ENCODE measurements at regions of chr3 and their contacts with region 1.

Region 1: DNA sequence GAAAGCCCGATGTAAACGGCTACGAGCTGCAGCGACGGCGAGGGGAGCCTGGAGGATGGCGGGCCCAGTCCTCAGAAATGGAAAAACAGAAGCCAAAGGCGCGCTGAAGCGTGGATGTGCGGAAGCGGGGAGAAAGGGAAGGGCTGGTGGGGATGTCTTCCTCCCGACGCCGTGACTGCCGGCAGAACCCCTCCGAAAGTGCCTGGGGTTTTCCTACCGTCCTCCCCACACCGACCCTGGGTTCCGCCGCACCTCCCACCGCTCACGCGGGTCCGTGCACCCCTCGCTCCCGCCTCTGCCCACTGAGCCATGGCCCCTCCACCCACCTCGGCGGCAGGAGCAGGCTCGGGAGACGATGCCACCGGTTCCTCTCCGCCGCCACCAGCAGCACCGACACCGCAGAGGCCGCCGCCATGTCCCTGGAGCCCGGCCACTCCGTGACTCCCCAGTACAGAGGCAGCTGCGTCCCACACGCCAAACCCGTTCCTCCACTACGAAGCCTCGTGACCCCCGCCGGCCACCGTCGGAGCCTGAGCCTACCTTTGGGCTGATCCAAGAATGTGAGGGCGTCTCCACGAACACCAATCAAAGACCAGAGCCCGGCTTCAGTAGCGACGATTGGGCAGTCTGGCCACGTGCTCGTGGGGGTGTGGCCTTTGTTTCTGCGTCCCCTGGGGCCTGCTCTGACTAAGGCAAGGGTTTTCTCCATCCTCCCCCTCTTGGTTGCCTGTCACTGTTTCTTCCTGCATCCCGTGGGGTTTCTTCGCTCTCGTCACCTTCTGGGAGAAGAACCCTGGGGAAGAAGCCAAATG is at the start of gene MCCC1:
- DNase-seq: peak; percentile 97
- ATAC-seq: peak; percentile 96
- H3K4me3 ChIP-seq: peak within 1 kb of the TSS; percentile 74 to 98 (median 98)
- H3K4me3 Mint-ChIP-seq: peak within 1 kb of the TSS; percentile 99
- H3K27ac ChIP-seq: peak within 1 kb of the TSS; percentile 80 to 87
- H3K27ac Mint-ChIP-seq: peak within 1 kb of the TSS; percentile 97
- H3K4me1 ChIP-seq: peaks cover 15% of the 10 kb centered on the region in 2 donors
- H3K4me1 Mint-ChIP-seq: peaks cover 35% of the 10 kb centered on the region
- H3K27me3 ChIP-seq: no peaks in the 10 kb centered on the region
- H3K27me3 Mint-ChIP-seq: no peaks in the 10 kb centered on the region
- CTCF ChIP-seq: no peak
- total RNA-seq, gene MCCC1: 32.8 and 36.3 TPM in 2 replicates

Region 2: DNA sequence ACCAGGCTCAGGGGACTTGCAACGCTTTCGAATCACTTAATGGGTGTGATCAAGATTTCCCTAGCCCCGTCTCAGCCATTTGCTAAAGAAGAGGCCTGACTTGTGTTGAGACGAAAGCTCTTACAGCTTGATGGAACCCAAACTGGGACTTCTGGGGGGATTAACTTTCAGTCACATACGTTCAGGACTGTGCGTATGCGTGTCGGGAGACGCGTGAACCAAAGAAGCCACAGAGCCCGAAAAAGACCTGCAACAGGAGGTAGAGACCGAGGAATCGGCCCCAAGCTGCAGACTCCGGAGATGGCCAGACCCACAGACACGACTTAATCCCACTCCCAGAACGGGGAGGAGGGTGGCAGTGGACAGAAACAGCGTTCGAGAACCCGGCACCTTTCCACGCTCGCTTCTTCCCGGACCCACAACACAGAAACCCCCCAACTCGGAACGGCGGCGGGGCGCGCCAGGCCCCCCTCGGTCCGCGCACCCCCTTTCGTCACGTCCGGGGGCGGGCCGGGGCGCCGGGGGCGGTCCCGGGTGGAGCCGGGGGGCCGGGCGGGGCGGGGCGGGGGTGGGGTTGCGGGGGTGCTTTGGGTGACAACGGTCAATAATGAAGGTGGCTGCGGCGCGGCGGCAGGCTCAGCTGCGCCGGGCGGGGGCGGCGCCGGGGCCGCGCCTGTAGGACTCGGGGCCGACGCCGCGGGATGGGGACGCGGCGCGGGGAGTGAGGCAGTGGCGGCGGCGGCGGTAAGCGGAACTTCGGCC is 306.1 kb before region 1 on chr3 and contains the start of gene ATP11B:
- CTCF ChIA-PET with region 1: no interaction called
- POLR2A ChIA-PET with region 1: no interaction called
- intact Hi-C with region 1: loop called (anchors 1 kb)
- DNase-seq: peak; percentile 91
- ATAC-seq: peak; percentile 79
- H3K4me3 ChIP-seq: peak within 1 kb of the TSS; percentile 78 to 99 (median 94)
- H3K4me3 Mint-ChIP-seq: peak within 1 kb of the TSS; percentile 100
- H3K27ac ChIP-seq: peak within 1 kb of the TSS; percentile 92 to 98
- H3K27ac Mint-ChIP-seq: peak within 1 kb of the TSS; percentile 100
- H3K4me1 ChIP-seq: peaks cover 34 to 40% of the 10 kb centered on the region in 2 donors
- H3K4me1 Mint-ChIP-seq: peaks cover 39% of the 10 kb centered on the region
- H3K27me3 ChIP-seq: no peaks in the 10 kb centered on the region
- H3K27me3 Mint-ChIP-seq: no peaks in the 10 kb centered on the region
- CTCF ChIP-seq: no peak
- total RNA-seq, gene ATP11B: 81.9 and 94.6 TPM in 2 replicates

Region 3: DNA sequence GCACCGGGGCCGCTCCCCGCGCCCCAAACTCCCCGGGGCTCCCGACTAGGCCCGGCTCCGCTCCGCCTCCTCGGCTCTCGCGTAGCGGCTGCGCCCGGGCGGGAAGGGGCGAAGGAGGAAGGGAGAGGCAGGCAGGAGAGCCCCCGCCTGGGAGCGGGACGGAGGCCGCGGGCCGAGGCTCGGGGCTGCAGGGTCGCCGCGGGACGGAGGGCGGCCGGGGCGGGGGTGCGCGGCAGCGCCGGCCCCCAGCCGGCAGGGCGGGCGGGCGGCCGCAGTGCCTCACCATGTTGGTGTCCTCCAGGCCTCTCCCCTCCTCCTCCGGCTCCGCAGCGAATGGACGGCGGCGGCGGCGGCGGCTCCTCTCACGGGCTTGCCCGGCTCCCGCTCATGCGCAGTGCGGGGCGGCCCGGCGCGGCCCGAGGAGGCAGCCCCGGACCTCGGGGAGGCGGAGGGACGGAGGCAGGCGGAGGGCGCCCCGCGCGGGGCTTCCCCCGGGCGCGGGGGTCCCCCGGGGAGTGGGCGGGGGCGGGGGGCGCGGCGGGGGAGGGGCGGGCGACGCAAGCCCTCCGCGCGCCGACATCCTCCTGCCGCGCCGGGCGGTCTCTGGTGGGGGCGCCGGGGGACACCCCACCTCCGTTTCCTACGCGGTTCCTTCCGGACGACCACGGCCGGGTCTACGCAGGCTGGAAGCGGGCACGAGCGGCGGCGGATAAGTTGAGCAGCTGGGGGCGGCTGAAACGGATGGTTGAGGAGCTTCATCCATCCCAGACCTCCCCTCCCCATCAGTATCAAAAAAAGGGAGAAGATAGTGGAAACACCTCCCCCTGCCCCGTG is 118.8 kb before region 1 on chr3 and contains the start of gene DCUN1D1:
- CTCF ChIA-PET with region 1: no interaction called
- POLR2A ChIA-PET with region 1: interaction called, 3 read pairs
- intact Hi-C with region 1: loop called (anchors 1 kb)
- DNase-seq: peak; percentile 91
- ATAC-seq: peak; percentile 92
- H3K4me3 ChIP-seq: peak within 1 kb of the TSS; percentile 70 to 89 (median 80)
- H3K4me3 Mint-ChIP-seq: peak within 1 kb of the TSS; percentile 93
- H3K27ac ChIP-seq: peak within 1 kb of the TSS; percentile 66 to 72
- H3K27ac Mint-ChIP-seq: peak within 1 kb of the TSS; percentile 91
- H3K4me1 ChIP-seq: peaks cover 18 to 21% of the 10 kb centered on the region in 2 donors
- H3K4me1 Mint-ChIP-seq: peaks cover 32% of the 10 kb centered on the region
- H3K27me3 ChIP-seq: no peaks in the 10 kb centered on the region
- H3K27me3 Mint-ChIP-seq: no peaks in the 10 kb centered on the region
- CTCF ChIP-seq: no peak
- total RNA-seq, gene DCUN1D1: 26.4 and 35.5 TPM in 2 replicates

Region 4: GRCh38 chr3:183116025-183116614 is 16.9 kb after region 1 on chr3:
- CTCF ChIA-PET with region 1: interaction called, 4 read pairs
- POLR2A ChIA-PET with region 1: no interaction called
- intact Hi-C with region 1: loop called (anchors 1 kb)
- DNase-seq: peak; percentile 92
- ATAC-seq: peak; percentile 89
- H3K4me3 ChIP-seq: peak overlapping the region in 4 of 5 experiments; percentile 17 to 43 (median 30)
- H3K4me3 Mint-ChIP-seq: peak overlapping the region; percentile 84
- H3K27ac ChIP-seq: no peak overlapping the region
- H3K27ac Mint-ChIP-seq: peak overlapping the region; percentile 87
- H3K4me1 ChIP-seq: peaks cover 31 to 36% of the 10 kb centered on the region in 2 donors
- H3K4me1 Mint-ChIP-seq: peaks cover 33% of the 10 kb centered on the region
- H3K27me3 ChIP-seq: peaks cover 0 to 43% (median 17%) of the 10 kb centered on the region in 4 experiments
- H3K27me3 Mint-ChIP-seq: peaks cover 24% of the 10 kb centered on the region
- CTCF ChIP-seq: no peak

Region 5: DNA sequence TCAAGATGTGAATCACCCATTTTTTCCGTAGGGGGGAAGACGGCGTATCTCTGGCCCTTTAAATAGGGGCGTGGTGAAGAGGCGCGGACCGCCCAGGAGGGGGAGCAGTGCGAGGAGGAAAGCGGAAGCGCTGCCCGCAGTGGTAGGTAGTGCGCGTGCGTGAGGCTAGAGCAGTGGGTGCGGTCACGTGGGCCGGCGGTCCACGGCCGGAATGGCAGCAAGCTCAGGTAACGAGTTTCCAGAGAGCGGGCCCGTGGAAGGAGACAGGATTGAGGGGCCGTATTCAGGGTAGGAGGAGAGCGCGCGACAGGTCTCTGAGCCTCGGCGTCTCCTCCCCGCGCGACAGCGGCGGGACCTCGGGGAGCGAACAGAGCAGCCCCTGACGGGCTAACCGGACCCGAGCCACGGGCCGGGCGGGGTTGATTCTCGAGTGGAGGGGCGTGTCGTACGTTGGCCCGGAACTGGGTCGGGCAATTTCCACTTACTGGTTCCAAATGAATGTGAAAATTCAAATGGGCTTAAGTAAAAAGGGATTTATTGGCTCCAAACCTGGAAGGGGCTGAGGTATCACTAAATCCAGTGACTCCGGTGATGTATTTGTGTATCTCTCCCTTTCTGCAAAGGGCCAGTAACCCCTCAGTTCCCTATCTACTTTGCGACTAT is 1712.9 kb after region 1 on chr3 and contains the start of gene VPS8:
- CTCF ChIA-PET with region 1: no interaction called
- POLR2A ChIA-PET with region 1: no interaction called
- intact Hi-C with region 1: loop called (anchors 10 kb)
- DNase-seq: peak; percentile 98
- ATAC-seq: peak; percentile 94
- H3K4me3 ChIP-seq: peak within 1 kb of the TSS; percentile 77 to 95 (median 92)
- H3K4me3 Mint-ChIP-seq: peak within 1 kb of the TSS; percentile 93
- H3K27ac ChIP-seq: peak within 1 kb of the TSS; percentile 70 to 76
- H3K27ac Mint-ChIP-seq: peak within 1 kb of the TSS; percentile 96
- H3K4me1 ChIP-seq: peaks cover 16 to 18% of the 10 kb centered on the region in 2 donors
- H3K4me1 Mint-ChIP-seq: peaks cover 28% of the 10 kb centered on the region
- H3K27me3 ChIP-seq: no peaks in the 10 kb centered on the region
- H3K27me3 Mint-ChIP-seq: peaks cover 3% of the 10 kb centered on the region
- CTCF ChIP-seq: peak; percentile 46
- total RNA-seq, gene VPS8: 95.6 and 106 TPM in 2 replicates

Measured in B cell (primary cell).